K562 (cell line): ENCODE measurements at regions of chr12 and their contacts with region 1.

Region 1: DNA sequence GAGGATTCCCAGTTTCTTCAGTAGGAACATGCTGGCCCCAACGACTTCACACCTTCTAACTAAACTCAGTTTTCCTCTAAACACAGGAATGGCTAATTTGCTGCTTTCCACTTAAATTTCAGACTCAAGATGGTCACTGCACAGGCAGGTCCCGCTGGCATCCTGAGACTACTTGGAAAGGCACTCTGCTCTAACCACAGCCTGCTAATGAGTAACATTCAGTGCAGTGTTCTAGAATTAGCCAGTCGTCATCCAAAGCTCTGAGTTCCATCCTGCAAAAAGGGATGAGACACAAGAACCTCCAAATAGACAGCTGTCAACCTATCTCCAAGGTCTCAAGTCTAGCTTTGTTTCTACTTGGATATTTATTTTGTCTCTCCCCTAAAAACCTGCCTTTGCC is 6.0 kb downstream of the CCDC92 start:
- DNase-seq: no peak
- ATAC-seq: peak; percentile 10; the same call in 2 of the 3 replicates
- H3K4me3 ChIP-seq: no peak overlapping the region
- H3K27ac ChIP-seq: no peak overlapping the region
- H3K4me1 ChIP-seq: peaks cover 0 to 27% of the 10 kb centered on the region in 2 experiments; a peak in 3 of 5 replicates
- H3K27me3 ChIP-seq: no peaks in the 10 kb centered on the region
- CTCF ChIP-seq: no peak
- EP300 ChIP-seq: no peak
- POLR2A ChIP-seq: no peak
- RAD21 ChIP-seq: no peak

Region 2: DNA sequence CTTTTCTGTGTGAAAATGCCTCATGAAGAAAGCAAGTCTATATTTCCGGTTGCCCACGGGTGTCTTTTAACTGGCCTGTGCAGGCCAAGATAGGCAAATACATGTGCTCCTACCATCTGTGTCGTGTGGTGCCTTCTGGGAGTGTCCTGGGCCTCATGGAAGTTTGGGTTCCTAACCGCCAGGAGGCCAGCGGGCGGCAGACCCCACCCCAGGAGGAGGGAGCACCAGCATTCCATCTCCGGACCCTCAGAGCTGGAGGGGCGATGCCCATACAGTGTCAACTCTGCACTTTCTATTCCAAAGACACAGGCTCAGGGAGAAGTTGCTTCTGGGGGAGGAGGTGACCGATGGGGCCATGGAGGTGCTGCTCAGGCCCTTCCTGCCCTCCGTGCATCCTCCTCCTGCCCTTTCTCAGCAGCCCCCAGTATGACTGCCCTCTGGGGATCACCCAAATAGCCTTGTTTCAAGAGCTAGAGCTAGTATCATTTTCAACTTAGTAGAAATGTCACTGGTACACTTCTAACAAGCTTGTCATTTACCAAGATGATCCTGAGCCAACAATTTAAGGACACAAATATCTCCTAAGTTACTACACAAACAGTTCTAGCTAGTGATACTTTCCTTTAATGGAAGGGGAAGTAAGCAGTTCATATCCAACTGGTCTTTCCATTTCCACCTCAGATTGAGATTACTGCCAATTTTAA is 11.8 kb before region 1 on chr12:
- CTCF ChIA-PET with region 1: no interaction called
- POLR2A ChIA-PET with region 1: interaction called, 16 read pairs
- in situ Hi-C with region 1: no loop called
- intact Hi-C with region 1: no loop called
- DNase-seq: no peak
- ATAC-seq: no peak
- H3K4me3 ChIP-seq: no peak overlapping the region
- H3K27ac ChIP-seq: no peak overlapping the region
- H3K4me1 ChIP-seq: peaks cover 2 to 4% of the 10 kb centered on the region in 2 experiments; a peak in 2 of 5 replicates
- H3K27me3 ChIP-seq: no peaks in the 10 kb centered on the region
- CTCF ChIP-seq: no peak
- EP300 ChIP-seq: no peak
- POLR2A ChIP-seq: no peak
- RAD21 ChIP-seq: no peak